T-cell (primary cell): ENCODE measurements at regions of chr1 and their contacts with region 1.

Region 1: GRCh38 chr1:115078708-115079107 is 10.6 kb downstream of the TSPAN2 start:
- DNase-seq: no peak
- ATAC-seq: no peak
- H3K4me3 ChIP-seq: no peak overlapping the region
- H3K4me3 Mint-ChIP-seq: no peak overlapping the region
- H3K27ac ChIP-seq: no peak overlapping the region
- H3K27ac Mint-ChIP-seq: no peak overlapping the region
- H3K4me1 ChIP-seq: no peaks in the 10 kb centered on the region
- H3K4me1 Mint-ChIP-seq: peaks cover 0 to 15% (median 1%) of the 10 kb centered on the region in 3 donors
- H3K27me3 ChIP-seq: no peaks in the 10 kb centered on the region
- H3K27me3 Mint-ChIP-seq: peaks cover 0 to 6% of the 10 kb centered on the region in 2 donors

Region 2: DNA sequence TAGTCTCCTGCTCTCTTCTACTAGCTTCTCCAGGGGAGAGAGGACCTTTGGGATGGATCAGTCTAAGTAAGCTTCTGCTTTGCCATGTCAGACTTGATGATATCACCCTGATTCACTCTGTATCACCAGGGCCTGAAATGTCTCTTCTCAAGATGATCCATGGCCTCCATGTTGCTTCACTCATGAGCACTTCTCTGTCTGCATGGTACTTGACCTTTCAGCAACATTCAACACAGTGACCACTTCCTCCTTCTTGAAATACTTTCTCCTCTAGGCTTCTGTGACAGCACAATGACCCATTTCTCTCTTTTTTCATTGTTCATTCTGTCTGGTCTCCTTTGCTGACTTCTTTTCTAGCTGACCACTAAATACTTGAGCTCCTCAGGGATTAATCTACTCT is 294.6 kb after region 1 on chr1:
- CTCF ChIA-PET with region 1: no interaction called
- POLR2A ChIA-PET with region 1: interaction called in 1 of 2 experiments, 10 read pairs
- DNase-seq: no peak
- ATAC-seq: no peak
- H3K4me3 ChIP-seq: no peak overlapping the region
- H3K4me3 Mint-ChIP-seq: no peak overlapping the region
- H3K27ac ChIP-seq: no peak overlapping the region
- H3K27ac Mint-ChIP-seq: no peak overlapping the region
- H3K4me1 ChIP-seq: no peaks in the 10 kb centered on the region
- H3K4me1 Mint-ChIP-seq: no peaks in the 10 kb centered on the region
- H3K27me3 ChIP-seq: no peaks in the 10 kb centered on the region
- H3K27me3 Mint-ChIP-seq: peaks cover 0 to 3% of the 10 kb centered on the region in 2 donors